Naive thymus-derived CD4-positive, alpha-beta T cell (primary cell): ENCODE measurements at regions of chr14 and their contacts with region 1.

Region 1: DNA sequence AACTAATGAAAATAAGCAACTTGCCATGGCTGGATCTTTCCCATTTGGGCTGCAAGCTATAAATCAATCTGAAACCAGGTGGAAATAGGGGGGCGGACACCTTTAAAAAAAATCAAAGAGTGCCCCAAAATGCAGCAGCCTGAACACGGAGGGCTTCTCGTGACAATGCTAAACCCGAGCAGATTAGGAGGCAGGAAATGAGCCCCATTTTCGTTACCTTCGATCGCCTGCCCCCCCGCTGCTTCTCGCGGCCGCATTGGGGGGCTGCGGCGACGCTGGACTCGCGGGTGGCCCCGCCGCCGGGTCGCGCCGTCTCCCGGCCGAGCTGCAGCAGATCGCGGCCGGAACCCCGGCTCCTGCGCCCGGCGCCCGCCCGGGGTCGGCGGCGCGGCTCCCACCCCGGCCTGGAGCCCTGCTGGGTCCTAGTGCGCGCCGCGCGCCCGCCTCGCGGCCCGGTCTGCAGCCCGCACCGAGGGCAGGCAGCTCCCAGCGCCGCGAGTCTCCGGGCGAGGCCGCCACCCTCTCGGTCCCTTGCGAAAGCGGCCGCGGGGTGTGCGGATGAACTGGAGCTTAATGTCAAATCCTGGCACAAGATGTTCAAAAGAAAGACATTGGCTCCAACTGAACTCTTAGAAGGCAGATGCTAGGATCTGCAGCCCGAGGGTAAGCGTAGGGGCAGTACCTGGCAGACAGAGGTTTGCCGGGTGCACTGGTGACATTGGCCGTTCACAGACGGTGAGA is 201.9 kb upstream of the FOXN3 start:
- DNase-seq: peak; percentile 64 to 80 (median 77)
- ATAC-seq: peak; percentile 77
- H3K4me3 ChIP-seq: peak overlapping the region; percentile 82
- H3K4me3 Mint-ChIP-seq: peak overlapping the region; percentile 90 to 100 (median 97)
- H3K27ac ChIP-seq: peak overlapping the region; percentile 84
- H3K27ac Mint-ChIP-seq: peak overlapping the region; percentile 93 to 98 (median 97)
- H3K4me1 ChIP-seq: peaks cover 38 to 49% of the 10 kb centered on the region in 2 donors
- H3K4me1 Mint-ChIP-seq: peaks cover 41 to 74% (median 66%) of the 10 kb centered on the region in 7 donors
- H3K27me3 ChIP-seq: no peaks in the 10 kb centered on the region
- H3K27me3 Mint-ChIP-seq: no peaks in the 10 kb centered on the region

Region 2: GRCh38 chr14:89178802-89179535 is 440.0 kb before region 1 on chr14:
- CTCF ChIA-PET with region 1: no interaction called
- POLR2A ChIA-PET with region 1: no interaction called
- intact Hi-C with region 1: loop called in 1 of 2 experiments (anchors 1 kb)
- DNase-seq: no peak
- ATAC-seq: no peak
- H3K4me3 ChIP-seq: no peak overlapping the region
- H3K4me3 Mint-ChIP-seq: no peak overlapping the region
- H3K27ac ChIP-seq: no peak overlapping the region
- H3K27ac Mint-ChIP-seq: peak overlapping the region in 6 of 9 donors; percentile 10 to 66 (median 26)
- H3K4me1 ChIP-seq: peaks cover 0 to 4% of the 10 kb centered on the region in 2 donors
- H3K4me1 Mint-ChIP-seq: peaks cover 5 to 44% (median 29%) of the 10 kb centered on the region in 7 donors
- H3K27me3 ChIP-seq: no peaks in the 10 kb centered on the region
- H3K27me3 Mint-ChIP-seq: no peaks in the 10 kb centered on the region

Region 3: DNA sequence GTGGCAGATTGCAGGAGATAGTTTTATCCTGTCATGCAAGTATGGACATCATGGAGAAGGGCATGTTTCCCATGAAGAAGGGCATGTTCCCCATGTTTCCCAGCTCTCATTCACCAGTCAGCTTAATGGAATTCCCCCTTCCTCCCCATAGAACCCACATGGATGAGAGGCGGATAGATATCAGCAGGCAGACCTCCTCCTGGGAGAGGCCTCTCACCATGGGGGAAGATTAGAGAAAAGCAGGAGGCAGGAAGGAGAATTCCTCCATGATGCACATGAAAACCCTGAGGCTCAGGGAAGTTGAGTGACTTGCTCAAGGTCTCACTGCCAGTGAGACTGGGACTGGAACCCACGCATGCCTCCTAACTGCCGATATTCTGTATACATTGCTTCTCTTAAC is 109.1 kb before region 1 on chr14:
- CTCF ChIA-PET with region 1: no interaction called
- POLR2A ChIA-PET with region 1: interaction called, 4 read pairs
- intact Hi-C with region 1: loop called (anchors 2 kb)
- DNase-seq: no peak
- ATAC-seq: no peak
- H3K4me3 ChIP-seq: no peak overlapping the region
- H3K4me3 Mint-ChIP-seq: peak overlapping the region; percentile 75 to 89 (median 84)
- H3K27ac ChIP-seq: peak overlapping the region; percentile 52
- H3K27ac Mint-ChIP-seq: peak overlapping the region; percentile 90 to 96 (median 94)
- H3K4me1 ChIP-seq: peaks cover 18 to 25% of the 10 kb centered on the region in 2 donors
- H3K4me1 Mint-ChIP-seq: peaks cover 46 to 79% (median 65%) of the 10 kb centered on the region in 7 donors
- H3K27me3 ChIP-seq: no peaks in the 10 kb centered on the region
- H3K27me3 Mint-ChIP-seq: no peaks in the 10 kb centered on the region

Region 4: GRCh38 chr14:89600950-89601826 is 17.8 kb before region 1 on chr14:
- CTCF ChIA-PET with region 1: no interaction called
- POLR2A ChIA-PET with region 1: interaction called, 11 read pairs
- intact Hi-C with region 1: loop called (anchors 1 to 2 kb)
- DNase-seq: no peak
- ATAC-seq: no peak
- H3K4me3 ChIP-seq: no peak overlapping the region
- H3K4me3 Mint-ChIP-seq: no peak overlapping the region
- H3K27ac ChIP-seq: no peak overlapping the region
- H3K27ac Mint-ChIP-seq: peak overlapping the region in 3 of 9 donors; percentile 48 to 64 (median 62)
- H3K4me1 ChIP-seq: peaks cover 13 to 26% of the 10 kb centered on the region in 2 donors
- H3K4me1 Mint-ChIP-seq: peaks cover 25 to 73% (median 58%) of the 10 kb centered on the region in 7 donors
- H3K27me3 ChIP-seq: no peaks in the 10 kb centered on the region
- H3K27me3 Mint-ChIP-seq: no peaks in the 10 kb centered on the region

Region 5: GRCh38 chr14:89672636-89673511 is 53.9 kb after region 1 on chr14:
- CTCF ChIA-PET with region 1: no interaction called
- POLR2A ChIA-PET with region 1: interaction called, 4 read pairs
- intact Hi-C with region 1: loop called in 1 of 2 experiments (anchors 2 kb)
- DNase-seq: no peak
- ATAC-seq: no peak
- H3K4me3 ChIP-seq: no peak overlapping the region
- H3K4me3 Mint-ChIP-seq: peak overlapping the region in 1 of 10 donors; percentile 53
- H3K27ac ChIP-seq: no peak overlapping the region
- H3K27ac Mint-ChIP-seq: peak overlapping the region in 5 of 9 donors; percentile 1 to 56 (median 32)
- H3K4me1 ChIP-seq: peaks cover 0 to 12% of the 10 kb centered on the region in 2 donors
- H3K4me1 Mint-ChIP-seq: peaks cover 21 to 58% (median 45%) of the 10 kb centered on the region in 7 donors
- H3K27me3 ChIP-seq: no peaks in the 10 kb centered on the region
- H3K27me3 Mint-ChIP-seq: no peaks in the 10 kb centered on the region

Region 6: DNA sequence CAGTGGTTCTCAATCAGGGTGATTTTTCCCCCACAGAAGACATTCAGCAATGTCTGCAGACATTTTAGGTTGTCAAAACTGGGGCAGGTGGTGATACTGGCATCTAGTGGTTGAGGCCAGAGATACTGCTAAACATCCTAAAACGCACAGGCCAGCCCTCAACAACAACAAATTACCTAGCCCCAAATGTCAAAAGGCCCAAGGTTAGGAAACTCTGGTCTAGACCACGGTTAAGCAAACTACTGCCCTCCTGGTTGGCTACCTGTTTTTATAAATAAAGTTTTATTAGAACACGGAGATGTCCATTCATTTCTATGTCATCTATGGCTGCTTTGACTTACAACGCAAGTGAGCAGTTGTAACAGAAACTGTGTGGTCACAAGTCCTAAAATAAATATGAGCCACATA is 148.9 kb after region 1 on chr14:
- CTCF ChIA-PET with region 1: interaction called, 4 read pairs
- POLR2A ChIA-PET with region 1: interaction called, 4 read pairs
- intact Hi-C with region 1: loop called (anchors 1 kb)
- DNase-seq: peak; percentile 14 to 77 (median 66)
- ATAC-seq: peak; percentile 95
- H3K4me3 ChIP-seq: no peak overlapping the region
- H3K4me3 Mint-ChIP-seq: peak overlapping the region in 9 of 10 donors; percentile 39 to 79 (median 72)
- H3K27ac ChIP-seq: no peak overlapping the region
- H3K27ac Mint-ChIP-seq: peak overlapping the region; percentile 45 to 92 (median 85)
- H3K4me1 ChIP-seq: peaks cover 8 to 21% of the 10 kb centered on the region in 2 donors
- H3K4me1 Mint-ChIP-seq: peaks cover 24 to 60% (median 44%) of the 10 kb centered on the region in 7 donors
- H3K27me3 ChIP-seq: no peaks in the 10 kb centered on the region
- H3K27me3 Mint-ChIP-seq: peaks cover 0 to 10% (median 0%) of the 10 kb centered on the region in 5 donors